ENCODE measurements at regions of chrX and their contacts with region 1.

Region 1: GRCh38 chrX:68196939-68197791 is 236.1 kb downstream of the OPHN1 start:
- DNase-seq: peak in 5 of 10 donors; percentile 10 to 31 (median 17)

Region 2: DNA sequence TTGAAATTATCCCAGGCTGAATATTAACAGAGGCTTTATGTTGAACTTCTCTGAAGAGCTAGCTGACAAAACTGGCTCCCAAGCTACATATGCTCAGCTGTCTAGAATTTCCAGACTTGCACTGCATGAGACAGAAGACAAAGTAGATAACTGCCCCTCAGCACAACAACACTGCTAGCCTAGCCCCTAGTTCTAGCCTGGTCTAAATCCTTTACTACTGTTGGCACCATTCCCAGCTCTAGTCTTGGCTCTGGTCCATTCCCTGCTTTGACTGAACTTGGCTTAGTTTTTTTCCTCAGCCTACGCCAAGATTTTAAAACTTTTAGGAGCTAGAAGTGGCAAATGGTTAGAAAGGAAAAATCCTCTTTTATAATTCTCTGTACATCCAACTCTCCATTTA is 243.8 kb after region 1 on chrX:
- intact Hi-C with region 1: no loop called
- DNase-seq: peak in 4 of 10 donors; percentile 18 to 49 (median 34)

Region 3: GRCh38 chrX:68462653-68463052 is 265.5 kb after region 1 on chrX:
- intact Hi-C with region 1: loop called (anchors 2 kb)
- DNase-seq: peak in 1 of 10 donors; percentile 8